ENCODE measurements at regions of chr6 and their contacts with region 1.

Region 1: GRCh38 chr6:81752138-81752920 is at the start of gene TENT5A:
- DNase-seq: peak; percentile 89
- H3K4me3 ChIP-seq: peak within 1 kb of the TSS; percentile 90 to 96 (median 93)
- H3K27ac ChIP-seq: peak within 1 kb of the TSS; percentile 86
- H3K4me1 ChIP-seq: peaks cover 13% of the 10 kb centered on the region
- H3K27me3 ChIP-seq: no peaks in the 10 kb centered on the region
- CTCF ChIP-seq: peak in 1 of 2 donors; percentile 8
- total RNA-seq, gene TENT5A: 2.6 to 4.7 TPM

Region 2: DNA sequence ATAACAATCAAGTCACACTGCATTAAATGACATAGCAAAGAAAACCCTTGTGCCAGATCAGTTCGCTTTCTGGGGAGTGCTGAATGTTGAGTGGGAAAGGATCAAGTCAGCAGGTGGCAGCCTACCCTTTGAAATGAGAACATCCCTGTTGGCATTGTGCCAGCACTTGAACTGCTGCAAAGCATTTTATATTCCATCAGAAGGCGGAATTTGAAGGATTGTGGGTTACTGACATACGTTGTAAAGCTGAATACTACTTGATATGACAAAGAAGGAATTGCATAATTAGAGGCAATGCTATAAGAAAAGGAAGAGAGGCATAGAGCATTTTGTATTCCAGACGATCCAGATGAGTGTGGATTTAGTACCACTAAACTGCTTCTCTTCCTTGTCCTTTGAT is 1619.3 kb before region 1 on chr6:
- CTCF ChIA-PET with region 1: interaction called, 3 read pairs
- dilution Hi-C with region 1: no loop called
- in situ Hi-C with region 1: no loop called
- intact Hi-C with region 1: loop called (anchors 10 kb)
- DNase-seq: peak; percentile 41
- H3K4me3 ChIP-seq: no peak overlapping the region
- H3K27ac ChIP-seq: no peak overlapping the region
- H3K4me1 ChIP-seq: peaks cover 9% of the 10 kb centered on the region
- H3K27me3 ChIP-seq: no peaks in the 10 kb centered on the region
- CTCF ChIP-seq: peak; percentile 64

Region 3: DNA sequence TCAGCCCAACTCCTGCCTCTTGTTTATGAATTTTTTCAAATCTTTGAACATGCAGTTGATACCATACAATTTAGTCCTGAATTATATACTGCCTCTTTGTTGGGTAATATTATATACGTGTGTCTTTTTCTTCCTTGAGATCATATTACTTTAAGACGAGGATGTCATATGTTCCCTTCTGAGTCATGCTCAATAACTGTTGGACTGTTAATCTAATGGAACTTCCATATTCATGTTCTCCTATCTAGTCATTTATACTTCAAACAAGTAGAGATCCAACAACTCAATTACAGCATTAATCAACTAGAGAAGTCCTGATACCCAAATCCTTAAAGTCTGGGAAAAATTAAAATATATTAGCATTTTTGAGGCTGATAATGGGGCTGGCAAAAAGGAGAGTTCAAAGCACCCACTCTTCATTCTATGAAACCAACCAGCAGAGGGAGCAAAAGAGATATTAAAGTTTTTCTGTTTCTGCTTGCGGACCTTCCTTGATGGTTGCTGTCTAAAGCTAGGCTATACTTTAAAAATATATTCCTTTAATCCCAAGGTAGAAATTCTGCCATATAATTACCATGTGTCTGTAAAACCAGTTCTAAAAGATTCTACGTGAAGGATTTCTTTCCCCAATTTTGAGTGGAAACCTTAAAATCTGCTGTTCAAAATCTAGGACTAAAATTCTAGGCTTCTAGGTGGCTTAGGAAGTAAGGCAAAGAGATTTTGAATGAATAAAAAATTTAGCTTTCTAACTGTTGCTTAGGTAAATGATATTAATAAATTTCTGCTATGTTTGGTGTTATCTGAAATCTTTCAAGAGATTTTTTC is 1147.0 kb before region 1 on chr6:
- CTCF ChIA-PET with region 1: no interaction called
- dilution Hi-C with region 1: no loop called
- in situ Hi-C with region 1: loop called in 1 of 2 experiments (anchors 25 kb)
- intact Hi-C with region 1: loop called (anchors 5 kb)
- DNase-seq: peak; percentile 57
- H3K4me3 ChIP-seq: no peak overlapping the region
- H3K27ac ChIP-seq: peak overlapping the region; percentile 12
- H3K4me1 ChIP-seq: peaks cover 26% of the 10 kb centered on the region
- H3K27me3 ChIP-seq: no peaks in the 10 kb centered on the region
- CTCF ChIP-seq: peak; percentile 52 to 63

Region 4: GRCh38 chr6:81241126-81242041 is 510.9 kb before region 1 on chr6:
- CTCF ChIA-PET with region 1: no interaction called
- dilution Hi-C with region 1: no loop called
- in situ Hi-C with region 1: no loop called
- intact Hi-C with region 1: loop called (anchors 5 kb)
- DNase-seq: peak; percentile 2
- H3K4me3 ChIP-seq: no peak overlapping the region
- H3K27ac ChIP-seq: no peak overlapping the region
- H3K4me1 ChIP-seq: no peaks in the 10 kb centered on the region
- H3K27me3 ChIP-seq: no peaks in the 10 kb centered on the region
- CTCF ChIP-seq: peak; percentile 38 to 50

Region 5: DNA sequence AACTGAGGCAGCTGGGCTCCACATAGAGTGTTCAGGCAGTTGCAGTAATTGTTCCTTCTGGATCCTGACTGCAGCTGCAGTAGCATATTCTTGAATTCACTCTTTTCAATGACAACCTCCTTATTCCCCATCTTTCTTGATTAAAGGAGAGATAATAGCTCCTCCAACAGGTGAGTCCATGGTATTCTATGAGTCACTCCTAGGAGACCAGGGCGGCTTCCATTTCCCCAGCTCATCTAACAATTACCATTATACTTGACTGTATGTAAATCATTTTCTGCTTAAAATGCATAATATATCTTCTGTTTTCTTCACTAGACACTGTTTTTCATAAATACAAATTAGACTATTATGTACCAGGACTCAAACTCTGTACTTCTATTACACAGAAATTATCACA is 62.2 kb before region 1 on chr6:
- CTCF ChIA-PET with region 1: no interaction called
- dilution Hi-C with region 1: no loop called
- in situ Hi-C with region 1: no loop called
- intact Hi-C with region 1: no loop called
- DNase-seq: no peak
- H3K4me3 ChIP-seq: no peak overlapping the region
- H3K27ac ChIP-seq: no peak overlapping the region
- H3K4me1 ChIP-seq: no peaks in the 10 kb centered on the region
- H3K27me3 ChIP-seq: no peaks in the 10 kb centered on the region
- CTCF ChIP-seq: no peak

Region 6: DNA sequence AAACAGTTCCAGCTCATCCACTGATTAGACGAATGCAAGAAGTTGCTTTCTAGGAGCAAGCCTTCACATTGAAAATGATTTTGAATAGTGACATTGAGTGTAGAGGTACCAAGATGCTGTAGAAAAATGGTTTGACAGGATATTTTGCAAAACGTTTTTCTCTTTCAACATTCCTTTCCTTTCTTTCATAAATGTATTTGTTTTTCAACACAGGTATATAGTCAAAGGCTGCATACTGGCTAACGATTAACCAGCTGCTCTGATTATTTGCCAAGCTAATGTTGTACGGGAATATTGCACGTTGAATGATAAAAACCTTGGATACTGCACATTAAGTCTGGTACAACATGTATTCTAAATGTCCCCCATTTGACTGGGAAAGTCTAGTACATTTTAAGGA is 78.9 kb after region 1 on chr6:
- CTCF ChIA-PET with region 1: no interaction called
- dilution Hi-C with region 1: no loop called
- in situ Hi-C with region 1: no loop called
- intact Hi-C with region 1: no loop called
- DNase-seq: no peak
- H3K4me3 ChIP-seq: no peak overlapping the region
- H3K27ac ChIP-seq: no peak overlapping the region
- H3K4me1 ChIP-seq: no peaks in the 10 kb centered on the region
- H3K27me3 ChIP-seq: no peaks in the 10 kb centered on the region
- CTCF ChIP-seq: no peak

Region 7: DNA sequence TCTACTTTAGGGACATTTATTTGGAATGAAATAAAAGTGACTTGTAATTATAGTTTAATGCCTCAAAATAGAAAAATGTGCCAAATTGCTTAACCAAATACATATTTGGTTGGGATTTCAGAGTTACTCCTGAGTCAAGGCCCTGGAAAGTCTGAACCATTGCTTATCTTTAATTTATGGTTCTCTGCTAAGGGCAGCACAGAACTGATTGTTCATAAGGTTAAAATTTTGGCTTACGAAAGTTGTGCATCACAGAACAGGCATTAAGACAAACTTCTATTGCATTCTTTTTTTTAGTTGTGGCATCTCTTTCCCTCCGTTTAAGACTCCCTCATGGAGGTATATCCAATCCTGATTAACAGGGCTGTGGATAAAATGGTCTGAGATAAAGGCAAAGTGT is 92.4 kb after region 1 on chr6:
- CTCF ChIA-PET with region 1: no interaction called
- dilution Hi-C with region 1: no loop called
- in situ Hi-C with region 1: no loop called
- intact Hi-C with region 1: no loop called
- DNase-seq: no peak
- H3K4me3 ChIP-seq: no peak overlapping the region
- H3K27ac ChIP-seq: no peak overlapping the region
- H3K4me1 ChIP-seq: no peaks in the 10 kb centered on the region
- H3K27me3 ChIP-seq: no peaks in the 10 kb centered on the region
- CTCF ChIP-seq: no peak

Region 8: DNA sequence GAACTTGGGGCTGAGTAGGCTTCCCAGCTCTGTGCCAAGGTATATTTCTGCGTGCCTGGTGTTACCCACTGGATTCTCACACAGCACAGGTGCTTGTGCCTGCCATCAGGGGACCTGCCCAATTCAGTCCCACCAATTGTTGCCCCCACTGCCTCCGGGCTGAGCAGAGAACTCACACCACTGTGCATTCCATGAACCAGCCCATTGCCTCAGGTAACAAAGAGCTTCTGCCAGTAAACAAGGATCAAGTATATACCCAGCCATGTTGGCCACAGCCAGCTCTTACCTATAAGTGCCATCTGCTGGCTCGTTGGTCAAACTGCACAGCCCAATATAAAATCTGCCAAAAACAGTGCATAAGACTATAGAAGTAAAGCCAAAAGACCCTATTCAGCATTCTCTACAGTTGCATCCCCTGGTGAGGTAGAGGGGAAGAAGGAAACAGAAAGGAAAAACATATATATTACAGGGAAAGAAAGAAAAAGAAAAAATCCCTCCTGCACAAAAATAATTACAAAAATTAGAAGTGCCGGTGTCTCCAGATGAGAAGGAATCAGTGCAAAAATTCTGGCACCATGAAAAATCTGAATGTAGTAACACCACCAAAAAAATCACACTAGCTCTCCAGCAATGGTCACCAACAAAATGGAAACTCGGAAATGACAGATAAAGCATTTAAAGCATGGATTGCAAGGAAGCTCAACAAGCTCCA is 253.9 kb after region 1 on chr6:
- CTCF ChIA-PET with region 1: interaction called, 5 read pairs
- dilution Hi-C with region 1: no loop called
- in situ Hi-C with region 1: loop called (anchors 25 kb)
- intact Hi-C with region 1: loop called (anchors 1 kb)
- DNase-seq: peak; percentile 41
- H3K4me3 ChIP-seq: no peak overlapping the region
- H3K27ac ChIP-seq: no peak overlapping the region
- H3K4me1 ChIP-seq: no peaks in the 10 kb centered on the region
- H3K27me3 ChIP-seq: no peaks in the 10 kb centered on the region
- CTCF ChIP-seq: peak; percentile 66 to 83

Region 9: GRCh38 chr6:82080767-82081166 is 328.4 kb after region 1 on chr6:
- CTCF ChIA-PET with region 1: no interaction called
- dilution Hi-C with region 1: no loop called
- in situ Hi-C with region 1: no loop called
- intact Hi-C with region 1: no loop called
- DNase-seq: no peak
- H3K4me3 ChIP-seq: no peak overlapping the region
- H3K27ac ChIP-seq: no peak overlapping the region
- H3K4me1 ChIP-seq: no peaks in the 10 kb centered on the region
- H3K27me3 ChIP-seq: no peaks in the 10 kb centered on the region
- CTCF ChIP-seq: no peak